ENCODE measurements at regions of chr17 and their contacts with region 1.

Region 1: GRCh38 chr17:7589204-7589868 is 558 bp downstream of the SOX15 start:
- DNase-seq: peak; percentile 37 to 76 (median 47)
- H3K4me3 ChIP-seq: no peak overlapping the region
- H3K4me3 Mint-ChIP-seq: peak overlapping the region in 1 of 7 donors; percentile 65
- H3K27ac ChIP-seq: no peak overlapping the region
- H3K27ac Mint-ChIP-seq: peak overlapping the region in 1 of 8 donors; percentile 83
- H3K4me1 ChIP-seq: peaks cover 8% of the 10 kb centered on the region
- H3K4me1 Mint-ChIP-seq: peaks cover 7 to 13% (median 12%) of the 10 kb centered on the region in 3 donors
- H3K27me3 ChIP-seq: no peaks in the 10 kb centered on the region
- H3K27me3 Mint-ChIP-seq: no peaks in the 10 kb centered on the region

Region 2: DNA sequence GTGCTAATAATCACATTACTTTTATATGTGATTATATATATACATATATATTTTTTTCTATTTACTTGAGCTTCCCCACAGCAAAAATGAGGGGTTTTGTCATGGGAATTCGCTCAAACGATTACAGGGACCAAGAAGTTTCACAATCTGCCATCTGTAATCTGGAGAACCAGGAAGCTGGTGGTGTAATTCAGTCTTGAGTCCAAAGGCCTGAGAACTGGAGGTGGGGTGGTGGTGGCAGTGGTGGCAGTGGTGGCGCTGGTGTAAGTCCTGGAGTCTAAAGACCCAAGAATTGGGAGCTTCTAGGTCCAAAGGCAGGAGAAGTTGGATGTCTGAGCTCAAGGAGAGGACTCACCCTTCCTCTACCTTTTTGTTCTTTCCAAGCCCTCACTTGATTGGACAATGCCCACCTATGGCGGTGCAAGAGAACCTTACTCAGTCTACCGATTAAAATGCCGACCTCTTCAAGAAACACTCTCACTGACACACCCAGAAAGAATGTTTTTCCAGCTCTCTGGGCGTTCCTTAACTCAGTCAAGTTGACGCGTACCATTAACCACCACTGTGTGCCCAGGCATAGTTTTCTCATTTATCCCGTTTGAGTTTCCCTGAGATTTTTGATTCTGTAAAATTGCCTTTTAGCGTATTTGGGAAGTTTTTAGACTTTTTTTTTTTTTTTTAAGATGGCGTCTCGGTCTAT is 73.3 kb before region 1 on chr17:
- CTCF ChIA-PET with region 1: interaction called, 18 read pairs
- POLR2A ChIA-PET with region 1: no interaction called
- DNase-seq: no peak
- H3K4me3 ChIP-seq: no peak overlapping the region
- H3K4me3 Mint-ChIP-seq: no peak overlapping the region
- H3K27ac ChIP-seq: no peak overlapping the region
- H3K27ac Mint-ChIP-seq: peak overlapping the region in 4 of 8 donors; percentile 29 to 79 (median 63)
- H3K4me1 ChIP-seq: no peaks in the 10 kb centered on the region
- H3K4me1 Mint-ChIP-seq: no peaks in the 10 kb centered on the region
- H3K27me3 ChIP-seq: no peaks in the 10 kb centered on the region
- H3K27me3 Mint-ChIP-seq: no peaks in the 10 kb centered on the region

Measured in CD8-positive, alpha-beta memory T cell (primary cell).